ENCODE measurements at regions of chr2 and their contacts with region 1.

Region 1: GRCh38 chr2:168455648-168456520 is at the start of gene CERS6:
- DNase-seq: peak; percentile 76 to 87
- H3K4me3 ChIP-seq: peak within 1 kb of the TSS; percentile 88
- H3K27ac ChIP-seq: no peak within 1 kb of the TSS
- H3K4me1 ChIP-seq: peaks cover 12% of the 10 kb centered on the region
- H3K27me3 ChIP-seq: no peaks in the 10 kb centered on the region
- CTCF ChIP-seq: no peak
- total RNA-seq, gene CERS6: 7.5 and 8.3 TPM in 2 replicates

Region 2: GRCh38 chr2:168545439-168546082 is 89.7 kb after region 1 on chr2:
- CTCF ChIA-PET with region 1: no interaction called
- POLR2A ChIA-PET with region 1: no interaction called
- intact Hi-C with region 1: loop called (anchors 5 kb)
- DNase-seq: peak; percentile 45 to 87
- H3K4me3 ChIP-seq: no peak overlapping the region
- H3K27ac ChIP-seq: peak overlapping the region; percentile 67
- H3K4me1 ChIP-seq: peaks cover 31% of the 10 kb centered on the region
- H3K27me3 ChIP-seq: no peaks in the 10 kb centered on the region
- CTCF ChIP-seq: no peak

Region 3: DNA sequence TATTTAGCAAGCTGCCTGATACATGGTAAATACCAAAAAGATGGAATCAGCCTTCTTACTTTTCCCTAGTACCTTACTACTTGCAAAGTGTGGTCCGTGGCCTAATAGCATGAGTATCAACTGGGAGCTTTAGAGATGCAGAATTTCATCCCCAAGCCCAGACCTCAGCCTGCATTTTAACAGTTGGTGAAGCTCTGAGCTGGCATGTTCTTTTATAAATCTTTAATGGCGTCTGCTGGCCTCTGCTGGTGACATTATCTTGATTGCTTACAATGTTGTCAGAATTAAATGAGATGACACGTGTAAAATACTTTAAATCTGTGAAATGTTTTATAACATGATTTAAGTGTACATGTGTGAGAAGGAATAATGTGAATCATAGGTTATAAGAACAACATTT is 231.4 kb after region 1 on chr2:
- CTCF ChIA-PET with region 1: interaction called, 4 read pairs
- POLR2A ChIA-PET with region 1: no interaction called
- intact Hi-C with region 1: loop called (anchors 10 kb)
- DNase-seq: no peak
- H3K4me3 ChIP-seq: no peak overlapping the region
- H3K27ac ChIP-seq: no peak overlapping the region
- H3K4me1 ChIP-seq: no peaks in the 10 kb centered on the region
- H3K27me3 ChIP-seq: no peaks in the 10 kb centered on the region
- CTCF ChIP-seq: peak; percentile 35; the same call in 1 of the 2 replicates